Astrocyte of the cerebellum (primary cell): ENCODE measurements at regions of chr4 and their contacts with region 1.

Region 1: DNA sequence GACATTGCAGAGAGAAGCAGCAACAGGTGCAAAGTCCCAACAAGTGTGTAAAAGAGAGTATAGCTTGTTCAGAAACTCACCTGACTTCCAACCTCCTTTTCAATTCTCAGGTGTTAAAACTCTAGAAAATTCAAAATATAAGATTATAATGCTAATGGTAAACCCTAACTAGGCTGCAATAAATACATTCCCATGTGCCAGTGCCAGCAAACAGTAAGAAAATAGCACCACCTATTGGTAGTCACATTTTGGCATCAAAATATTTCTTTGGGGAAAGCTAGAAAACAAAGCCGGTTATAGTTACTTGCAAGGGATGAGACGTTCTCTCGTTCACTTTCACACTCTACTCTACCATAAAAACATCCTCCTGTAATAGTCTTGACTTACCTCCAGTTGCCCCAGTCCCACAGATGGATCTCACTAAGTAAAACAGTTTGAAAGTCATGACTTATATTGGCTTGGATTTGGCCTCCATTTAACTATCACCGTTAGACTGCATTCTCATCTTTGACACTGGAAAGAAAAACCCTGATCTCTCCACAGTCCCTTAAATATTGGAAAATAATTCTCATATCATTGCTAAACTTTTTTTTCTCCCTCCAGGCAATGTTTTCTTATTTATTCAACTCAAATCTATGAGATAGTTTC is 9.6 kb downstream of the BMP3 start:
- DNase-seq: peak; percentile 29
- H3K4me3 ChIP-seq: no peak overlapping the region
- CTCF ChIP-seq: peak; percentile 65

Region 2: DNA sequence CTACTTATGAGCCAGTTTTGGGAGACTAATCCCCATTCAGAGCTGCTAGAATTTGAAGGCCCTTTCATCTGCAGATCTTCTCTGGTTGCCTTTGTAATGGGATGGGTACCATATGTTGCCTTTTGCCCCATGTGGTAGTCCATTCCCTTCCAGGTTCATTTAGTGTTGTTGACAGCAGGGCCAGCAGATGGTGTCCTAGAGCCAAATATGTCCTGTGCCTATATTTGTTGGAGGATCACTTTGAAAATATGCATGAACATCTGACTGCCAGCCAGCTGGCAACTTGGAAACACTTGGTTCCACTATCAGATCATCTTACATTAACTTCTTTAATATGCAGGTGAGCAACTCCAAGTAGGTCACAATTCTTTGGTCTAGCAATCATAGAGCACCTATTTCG is 674.2 kb before region 1 on chr4:
- in situ Hi-C with region 1: loop called (anchors 25 kb)
- DNase-seq: peak; percentile 71
- H3K4me3 ChIP-seq: no peak overlapping the region
- CTCF ChIP-seq: peak; percentile 83

Region 3: GRCh38 chr4:80948141-80948540 is 92.0 kb before region 1 on chr4:
- in situ Hi-C with region 1: no loop called
- DNase-seq: no peak
- H3K4me3 ChIP-seq: no peak overlapping the region
- CTCF ChIP-seq: no peak

Region 4: GRCh38 chr4:81421346-81422218 is 381.4 kb after region 1 on chr4:
- in situ Hi-C with region 1: no loop called
- DNase-seq: peak; percentile 8
- H3K4me3 ChIP-seq: no peak overlapping the region
- CTCF ChIP-seq: no peak